Activated naive CD8-positive, alpha-beta T cell treated with anti-CD3 and anti-CD28 coated beads, Interleukin-2, amount 10 ng/mL, durations not matched to agents 7 days and 5 days (primary cell): ENCODE measurements at regions of chr15 and their contacts with region 1.

Region 1: DNA sequence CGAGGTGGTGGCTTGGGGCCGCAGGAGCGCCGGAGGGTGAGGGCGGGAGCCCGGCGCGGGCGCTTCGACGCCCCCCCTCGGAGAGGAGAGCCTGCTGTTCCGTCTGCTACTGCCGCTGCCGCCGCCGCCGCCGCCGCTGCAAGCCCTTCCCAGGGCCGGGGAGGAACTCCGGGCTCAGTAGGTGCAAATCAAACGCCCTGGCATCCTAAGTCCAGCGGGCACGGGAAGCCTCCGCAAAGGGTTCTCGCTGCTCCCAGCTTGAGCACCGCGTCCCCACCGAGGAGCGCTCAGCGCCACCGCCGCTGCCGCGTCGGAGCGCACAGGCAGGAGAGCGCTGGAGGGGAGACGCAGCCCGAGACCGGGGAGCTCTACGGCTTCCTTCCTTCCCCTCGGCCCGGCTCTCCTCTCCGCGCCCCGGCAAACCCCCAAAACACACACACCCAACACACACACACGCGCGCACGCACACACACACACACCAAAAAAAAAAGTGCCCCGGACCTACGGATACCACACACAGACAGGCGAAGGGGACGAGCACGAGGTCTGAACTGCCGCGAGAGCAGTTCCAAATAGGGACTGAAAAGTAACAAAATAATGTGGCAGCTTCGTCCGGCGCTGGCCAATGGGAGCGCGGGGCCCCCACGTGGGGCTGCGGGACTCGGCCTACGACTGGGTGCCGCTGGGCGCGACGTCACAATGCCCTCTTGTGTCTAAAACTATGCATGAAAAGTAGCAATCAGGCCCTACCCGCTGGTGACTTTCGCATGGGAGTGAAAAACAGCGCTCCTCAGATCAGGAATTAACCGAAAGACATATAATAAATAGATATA is at the start of gene TLE3:
- DNase-seq: peak; percentile 98
- ATAC-seq: peak; percentile 69
- H3K4me3 Mint-ChIP-seq: peak within 1 kb of the TSS; percentile 97
- H3K27ac Mint-ChIP-seq: peak within 1 kb of the TSS; percentile 100
- H3K4me1 Mint-ChIP-seq: peaks cover 43% of the 10 kb centered on the region
- H3K27me3 Mint-ChIP-seq: peaks cover 7% of the 10 kb centered on the region
- total RNA-seq, gene TLE3: 80.5 to 87.9 TPM

Region 2: GRCh38 chr15:69452692-69453521 is 644.6 kb before region 1 on chr15 and contains the start of gene RPLP1:
- POLR2A ChIA-PET with region 1: interaction called, 13 read pairs
- DNase-seq: peak; percentile 97
- ATAC-seq: peak; percentile 89
- H3K4me3 Mint-ChIP-seq: peak within 1 kb of the TSS; percentile 100
- H3K27ac Mint-ChIP-seq: peak within 1 kb of the TSS; percentile 100
- H3K4me1 Mint-ChIP-seq: peaks cover 31% of the 10 kb centered on the region
- H3K27me3 Mint-ChIP-seq: no peaks in the 10 kb centered on the region
- total RNA-seq, gene RPLP1: 1,785 to 1,910 TPM

Region 3: GRCh38 chr15:70023064-70023768 is 74.3 kb before region 1 on chr15:
- POLR2A ChIA-PET with region 1: interaction called, 11 read pairs
- DNase-seq: peak; percentile 47
- ATAC-seq: peak; percentile 98
- H3K4me3 Mint-ChIP-seq: peak overlapping the region; percentile 75
- H3K27ac Mint-ChIP-seq: peak overlapping the region; percentile 95
- H3K4me1 Mint-ChIP-seq: peaks cover 22% of the 10 kb centered on the region
- H3K27me3 Mint-ChIP-seq: peaks cover 20% of the 10 kb centered on the region

Region 4: DNA sequence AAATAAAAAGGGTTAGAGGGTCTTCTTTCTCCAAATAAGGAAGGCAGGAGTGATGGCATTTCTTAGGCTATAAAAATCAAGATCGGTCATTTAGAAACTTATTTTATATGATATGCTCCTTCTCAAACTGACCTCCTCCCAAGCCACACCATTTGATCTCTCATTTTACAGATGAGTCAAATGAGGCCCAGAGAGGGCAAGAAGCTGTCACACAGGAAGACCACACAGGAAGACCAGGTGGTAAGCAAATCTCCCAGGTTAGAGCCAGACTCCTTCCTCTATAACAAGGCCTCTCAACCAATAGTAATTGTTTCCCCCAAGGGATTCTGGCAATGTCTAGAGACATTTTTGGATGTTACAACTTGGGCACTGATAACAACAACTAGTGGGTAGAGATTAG is 13.6 kb before region 1 on chr15:
- POLR2A ChIA-PET with region 1: interaction called, 14 read pairs
- DNase-seq: no peak
- ATAC-seq: peak; percentile 85
- H3K4me3 Mint-ChIP-seq: peak overlapping the region; percentile 63
- H3K27ac Mint-ChIP-seq: peak overlapping the region; percentile 15
- H3K4me1 Mint-ChIP-seq: peaks cover 48% of the 10 kb centered on the region
- H3K27me3 Mint-ChIP-seq: no peaks in the 10 kb centered on the region

Region 5: DNA sequence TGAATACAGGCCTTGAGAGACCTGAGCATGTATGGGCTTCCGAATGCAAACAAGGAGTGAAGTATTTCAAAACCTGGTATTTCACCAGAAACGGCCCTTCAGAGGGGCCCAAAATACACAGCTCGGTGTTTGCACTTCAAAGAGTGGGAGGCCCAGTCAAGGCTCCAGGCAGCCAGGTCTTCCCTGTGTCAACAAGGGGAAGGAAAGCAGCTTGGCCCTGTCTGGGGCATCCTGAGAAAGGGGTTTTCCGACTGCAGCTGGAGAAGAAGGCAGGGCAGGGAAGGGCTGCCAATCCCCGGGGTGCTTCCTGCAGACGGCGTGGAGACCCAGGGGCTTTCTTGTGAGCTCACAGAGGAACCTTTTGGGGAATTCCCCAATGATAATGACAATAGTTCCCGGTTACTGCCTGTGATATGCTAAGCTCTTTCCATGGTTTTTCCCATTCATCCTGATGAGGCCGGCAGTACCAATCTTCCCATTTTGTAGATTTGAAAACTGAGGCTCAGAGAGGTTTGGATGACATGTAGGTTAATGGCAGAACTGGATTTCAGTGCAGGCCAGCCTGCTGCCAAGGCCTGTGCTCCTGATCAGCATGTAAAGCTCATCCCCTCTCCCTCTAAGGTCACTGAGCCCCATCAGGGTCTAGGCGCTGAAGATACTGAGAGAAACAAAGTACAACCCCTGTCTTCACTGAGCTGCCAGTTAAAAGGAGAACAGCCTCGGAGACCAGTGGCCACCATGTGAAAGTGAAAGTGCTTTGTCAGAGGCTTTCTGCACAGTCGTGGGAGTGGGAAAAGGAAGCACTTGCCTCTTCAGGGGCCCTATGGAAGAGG is 43.2 kb after region 1 on chr15:
- POLR2A ChIA-PET with region 1: interaction called, 20 read pairs
- DNase-seq: no peak
- ATAC-seq: peak; percentile 53
- H3K4me3 Mint-ChIP-seq: peak overlapping the region; percentile 61
- H3K27ac Mint-ChIP-seq: peak overlapping the region; percentile 46
- H3K4me1 Mint-ChIP-seq: peaks cover 32% of the 10 kb centered on the region
- H3K27me3 Mint-ChIP-seq: peaks cover 27% of the 10 kb centered on the region

Region 6: DNA sequence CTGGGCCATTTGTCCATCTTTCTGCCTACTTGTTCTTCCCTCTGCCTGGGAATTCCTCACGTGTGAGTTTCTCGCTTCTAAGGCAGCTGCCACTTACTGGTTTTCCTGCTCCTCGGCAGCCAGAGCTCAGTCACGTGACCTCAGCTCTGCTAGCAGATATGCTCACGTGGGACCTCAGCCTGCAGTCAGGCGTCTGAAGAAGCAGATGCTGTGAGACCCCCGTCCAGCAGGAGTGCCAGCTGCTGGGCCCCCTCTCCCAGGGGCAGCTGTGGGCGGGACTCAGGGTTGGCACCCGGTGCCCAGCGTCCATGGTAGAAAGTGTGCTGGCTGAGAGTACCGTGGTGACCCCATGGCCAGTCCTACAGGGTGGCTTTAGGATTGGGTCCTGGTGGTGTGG is 161.5 kb after region 1 on chr15:
- POLR2A ChIA-PET with region 1: interaction called, 13 read pairs
- DNase-seq: no peak
- ATAC-seq: peak; percentile 33
- H3K4me3 Mint-ChIP-seq: peak overlapping the region; percentile 72
- H3K27ac Mint-ChIP-seq: peak overlapping the region; percentile 87
- H3K4me1 Mint-ChIP-seq: peaks cover 55% of the 10 kb centered on the region
- H3K27me3 Mint-ChIP-seq: peaks cover 8% of the 10 kb centered on the region